ENCODE measurements at regions of chr16 and their contacts with region 1.

Region 1: DNA sequence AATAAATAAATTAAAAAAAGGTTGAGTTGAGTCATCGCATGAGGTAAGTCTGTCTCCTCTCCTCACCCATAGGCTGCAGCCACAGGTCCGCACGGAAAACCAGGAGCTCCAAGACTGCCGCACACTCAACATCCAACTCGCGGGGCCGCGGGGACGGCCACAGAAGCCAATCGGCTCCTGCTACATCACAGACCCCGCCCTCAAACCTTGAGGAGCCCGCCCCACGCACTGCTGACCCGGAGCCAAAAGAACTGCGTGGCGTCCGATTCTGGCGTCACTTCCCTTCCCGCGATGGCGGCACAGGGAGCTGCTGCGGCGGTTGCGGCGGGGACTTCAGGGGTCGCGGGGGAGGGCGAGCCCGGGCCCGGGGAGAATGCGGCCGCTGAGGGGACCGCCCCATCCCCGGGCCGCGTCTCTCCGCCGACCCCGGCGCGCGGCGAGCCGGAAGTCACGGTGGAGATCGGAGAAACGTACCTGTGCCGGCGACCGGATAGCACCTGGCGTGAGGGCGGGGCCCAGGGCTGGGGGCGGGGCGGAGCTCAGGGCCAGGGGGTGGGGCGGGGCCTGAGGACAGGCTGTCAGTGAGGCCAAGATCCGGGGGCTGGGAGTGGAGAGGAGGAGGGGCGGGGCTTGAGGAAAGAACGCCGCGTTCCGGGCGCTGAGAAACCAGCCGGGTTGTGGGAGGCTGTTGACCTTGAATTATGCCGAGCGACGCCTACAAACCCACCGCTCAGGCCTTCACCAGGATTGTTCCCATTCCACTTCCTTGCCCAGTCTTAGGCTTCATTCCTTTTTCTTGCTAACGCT is at the start of gene KAT8:
- DNase-seq: peak; percentile 96 to 99 (median 97)
- H3K4me3 ChIP-seq: peak within 1 kb of the TSS; percentile 61 to 91 (median 79)
- H3K4me3 Mint-ChIP-seq: peak within 1 kb of the TSS; percentile 91
- H3K27ac ChIP-seq: peak within 1 kb of the TSS; percentile 97 to 99
- H3K27ac Mint-ChIP-seq: peak within 1 kb of the TSS; percentile 97 to 100 (median 100)
- H3K4me1 ChIP-seq: peaks cover 55 to 67% of the 10 kb centered on the region in 2 donors
- H3K4me1 Mint-ChIP-seq: peaks cover 54% of the 10 kb centered on the region
- H3K27me3 ChIP-seq: no peaks in the 10 kb centered on the region
- H3K27me3 Mint-ChIP-seq: peaks cover 0 to 2% (median 0%) of the 10 kb centered on the region in 3 donors
- CTCF ChIP-seq: no peak
- polyA plus RNA-seq, gene KAT8: 34.5 to 136 (median 42.0) TPM

Region 2: DNA sequence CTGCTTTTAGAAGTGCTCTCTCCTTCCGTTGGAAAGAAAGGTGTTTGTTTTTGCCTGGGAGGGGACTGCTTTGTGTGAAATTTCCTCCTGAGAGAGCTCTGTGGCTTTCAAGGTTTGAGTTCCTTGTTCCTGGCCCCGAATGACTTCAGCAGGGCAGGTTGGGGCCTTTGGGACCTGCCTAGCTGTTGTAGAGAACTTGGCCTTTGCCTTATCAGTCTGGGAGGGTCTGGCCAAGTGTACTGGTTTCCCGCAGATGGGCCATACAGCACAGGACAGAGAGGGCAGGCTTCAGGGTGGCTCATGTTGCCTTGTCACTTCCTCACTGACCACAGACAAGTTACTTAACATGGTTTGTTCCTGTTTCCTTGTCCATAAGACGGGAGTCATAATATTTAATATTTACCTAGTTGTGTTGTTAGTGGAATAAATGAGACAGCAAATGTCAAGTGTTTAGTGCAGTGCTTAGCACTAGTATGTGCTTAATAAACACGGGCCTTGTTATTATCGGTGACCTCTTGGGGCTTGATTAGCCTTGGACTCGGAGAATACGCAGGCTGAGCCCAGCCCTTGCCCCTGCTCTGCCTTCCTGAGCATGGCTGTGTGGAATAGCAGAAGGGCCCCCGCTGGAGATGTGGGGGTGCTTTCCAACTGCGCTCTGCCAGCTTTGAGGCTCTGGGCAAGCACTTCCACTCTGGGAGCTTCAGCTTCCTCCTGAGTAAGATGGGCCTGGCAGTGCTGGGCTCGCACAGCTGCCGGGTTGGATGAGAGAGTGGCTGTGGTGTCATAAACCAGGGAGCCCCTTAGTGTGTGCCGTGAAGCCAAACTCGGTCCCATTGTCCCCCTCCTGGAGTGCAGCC is 11.3 kb after region 1 on chr16:
- intact Hi-C with region 1: loop called in 1 of 2 experiments (anchors 1 kb)
- DNase-seq: peak; percentile 96 to 98 (median 97)
- H3K4me3 ChIP-seq: peak overlapping the region in 1 of 3 experiments; percentile 53
- H3K4me3 Mint-ChIP-seq: peak overlapping the region; percentile 53 to 84
- H3K27ac ChIP-seq: peak overlapping the region; percentile 99
- H3K27ac Mint-ChIP-seq: peak overlapping the region; percentile 98 to 100 (median 99)
- H3K4me1 ChIP-seq: peaks cover 60 to 76% of the 10 kb centered on the region in 2 donors
- H3K4me1 Mint-ChIP-seq: peaks cover 70% of the 10 kb centered on the region
- H3K27me3 ChIP-seq: no peaks in the 10 kb centered on the region
- H3K27me3 Mint-ChIP-seq: peaks cover 0 to 4% (median 0%) of the 10 kb centered on the region in 3 donors
- CTCF ChIP-seq: no peak

Region 3: GRCh38 chr16:31168848-31169247 is 51.3 kb after region 1 on chr16:
- intact Hi-C with region 1: no loop called
- DNase-seq: no peak
- H3K4me3 ChIP-seq: no peak overlapping the region
- H3K4me3 Mint-ChIP-seq: no peak overlapping the region
- H3K27ac ChIP-seq: no peak overlapping the region
- H3K27ac Mint-ChIP-seq: no peak overlapping the region
- H3K4me1 ChIP-seq: no peaks in the 10 kb centered on the region
- H3K4me1 Mint-ChIP-seq: peaks cover 6% of the 10 kb centered on the region
- H3K27me3 ChIP-seq: no peaks in the 10 kb centered on the region
- H3K27me3 Mint-ChIP-seq: peaks cover 0 to 5% (median 5%) of the 10 kb centered on the region in 3 donors
- CTCF ChIP-seq: no peak

Region 4: DNA sequence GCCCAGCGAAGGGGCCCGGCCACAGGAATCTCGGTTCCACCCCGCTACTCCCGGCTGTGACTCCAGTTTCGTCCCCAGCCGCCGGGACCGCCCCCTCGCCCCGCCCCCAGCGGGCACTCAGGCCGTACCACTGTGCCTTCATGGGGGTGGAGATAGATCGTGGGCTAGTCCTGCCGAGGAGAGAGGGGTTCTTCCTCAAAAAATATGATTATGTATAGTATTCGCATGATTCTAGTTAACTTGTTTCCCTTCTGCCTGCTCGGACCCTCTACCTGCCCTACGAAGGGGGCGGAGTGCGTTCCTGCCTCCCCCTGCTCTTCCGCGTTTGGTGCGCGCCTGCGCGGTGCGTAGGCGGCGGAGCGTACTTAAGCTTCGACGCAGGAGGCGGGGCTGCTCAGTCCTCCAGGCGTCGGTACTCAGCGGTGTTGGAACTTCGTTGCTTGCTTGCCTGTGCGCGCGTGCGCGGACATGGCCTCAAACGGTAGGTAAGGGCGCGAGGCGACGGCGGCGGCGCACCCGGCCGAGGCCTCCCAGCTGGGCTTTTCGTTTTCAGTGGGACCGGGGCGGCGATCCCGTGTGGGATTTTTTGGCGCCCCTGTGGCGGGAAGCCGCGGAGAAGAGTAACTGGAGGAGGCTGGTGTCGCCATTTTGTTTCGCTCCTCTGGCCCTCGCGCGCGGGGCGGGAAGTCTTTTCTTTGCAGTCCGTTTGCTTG is 62.3 kb after region 1 on chr16 and contains the start of gene FUS:
- intact Hi-C with region 1: loop called in 1 of 2 experiments (anchors 2 kb)
- DNase-seq: peak; percentile 91 to 96 (median 94)
- H3K4me3 ChIP-seq: peak within 1 kb of the TSS; percentile 71 to 98 (median 95)
- H3K4me3 Mint-ChIP-seq: peak within 1 kb of the TSS; percentile 93 to 94
- H3K27ac ChIP-seq: peak within 1 kb of the TSS; percentile 88 to 95
- H3K27ac Mint-ChIP-seq: peak within 1 kb of the TSS; percentile 97 to 100 (median 99)
- H3K4me1 ChIP-seq: peaks cover 36 to 46% of the 10 kb centered on the region in 2 donors
- H3K4me1 Mint-ChIP-seq: peaks cover 49% of the 10 kb centered on the region
- H3K27me3 ChIP-seq: no peaks in the 10 kb centered on the region
- H3K27me3 Mint-ChIP-seq: peaks cover 2 to 6% (median 4%) of the 10 kb centered on the region in 3 donors
- CTCF ChIP-seq: no peak
- polyA plus RNA-seq, gene FUS: 54.9 to 246 (median 78.5) TPM

Region 5: DNA sequence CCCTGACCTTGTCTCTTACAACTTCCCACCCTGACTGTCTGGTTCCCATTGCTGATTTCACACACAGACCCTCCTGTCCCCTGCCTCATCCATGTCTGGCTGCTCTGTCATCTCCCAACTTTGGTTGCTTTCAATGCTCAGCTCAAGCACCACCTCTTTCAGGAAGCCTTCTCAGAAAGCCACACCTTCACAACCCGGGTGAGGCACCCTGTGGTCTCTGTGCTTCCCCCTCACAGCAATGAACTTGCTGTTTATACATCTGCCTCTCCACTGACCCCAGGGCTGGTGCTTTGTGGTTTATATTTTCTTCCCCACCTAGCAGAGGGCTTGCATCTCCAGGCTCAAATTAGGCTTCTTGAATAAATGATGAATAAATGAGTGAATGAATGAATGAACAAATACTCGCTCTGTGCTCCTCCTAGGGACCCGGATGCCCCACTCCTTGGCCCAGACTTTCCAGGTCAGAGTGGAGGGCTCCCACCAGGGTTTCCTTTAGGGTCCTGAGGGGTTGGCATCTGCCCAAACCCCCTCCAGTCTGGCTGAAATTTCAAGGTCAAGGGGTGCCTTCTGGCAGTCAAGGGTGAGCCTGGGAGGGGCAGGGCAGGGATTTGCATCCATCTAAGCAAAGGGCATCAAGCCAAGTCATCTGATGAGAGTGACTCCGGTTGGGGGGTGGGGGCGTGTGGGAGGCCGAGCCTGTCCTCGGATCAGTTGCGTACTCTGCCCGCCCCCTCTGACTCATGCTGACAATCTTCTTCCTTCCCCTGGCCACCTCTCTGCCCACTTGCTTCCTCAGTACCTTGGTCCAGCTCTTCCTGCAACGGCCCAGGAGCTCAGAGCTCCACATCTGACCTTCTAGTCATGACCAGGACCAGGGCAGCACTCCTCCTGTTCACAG is 237.0 kb after region 1 on chr16 and contains the start of gene ITGAX:
- intact Hi-C with region 1: loop called (anchors 5 kb)
- DNase-seq: peak; percentile 97 to 98 (median 97)
- H3K4me3 ChIP-seq: peak within 1 kb of the TSS; percentile 67 to 93 (median 75)
- H3K4me3 Mint-ChIP-seq: peak within 1 kb of the TSS; percentile 97 to 100
- H3K27ac ChIP-seq: peak within 1 kb of the TSS; percentile 99
- H3K27ac Mint-ChIP-seq: peak within 1 kb of the TSS; percentile 99 to 100 (median 100)
- H3K4me1 ChIP-seq: peaks cover 95 to 100% of the 10 kb centered on the region in 2 donors
- H3K4me1 Mint-ChIP-seq: peaks cover 82% of the 10 kb centered on the region
- H3K27me3 ChIP-seq: no peaks in the 10 kb centered on the region
- H3K27me3 Mint-ChIP-seq: peaks cover 0 to 10% (median 3%) of the 10 kb centered on the region in 3 donors
- CTCF ChIP-seq: no peak
- polyA plus RNA-seq, gene ITGAX: 40.7 to 710 (median 71.3) TPM

Region 6: DNA sequence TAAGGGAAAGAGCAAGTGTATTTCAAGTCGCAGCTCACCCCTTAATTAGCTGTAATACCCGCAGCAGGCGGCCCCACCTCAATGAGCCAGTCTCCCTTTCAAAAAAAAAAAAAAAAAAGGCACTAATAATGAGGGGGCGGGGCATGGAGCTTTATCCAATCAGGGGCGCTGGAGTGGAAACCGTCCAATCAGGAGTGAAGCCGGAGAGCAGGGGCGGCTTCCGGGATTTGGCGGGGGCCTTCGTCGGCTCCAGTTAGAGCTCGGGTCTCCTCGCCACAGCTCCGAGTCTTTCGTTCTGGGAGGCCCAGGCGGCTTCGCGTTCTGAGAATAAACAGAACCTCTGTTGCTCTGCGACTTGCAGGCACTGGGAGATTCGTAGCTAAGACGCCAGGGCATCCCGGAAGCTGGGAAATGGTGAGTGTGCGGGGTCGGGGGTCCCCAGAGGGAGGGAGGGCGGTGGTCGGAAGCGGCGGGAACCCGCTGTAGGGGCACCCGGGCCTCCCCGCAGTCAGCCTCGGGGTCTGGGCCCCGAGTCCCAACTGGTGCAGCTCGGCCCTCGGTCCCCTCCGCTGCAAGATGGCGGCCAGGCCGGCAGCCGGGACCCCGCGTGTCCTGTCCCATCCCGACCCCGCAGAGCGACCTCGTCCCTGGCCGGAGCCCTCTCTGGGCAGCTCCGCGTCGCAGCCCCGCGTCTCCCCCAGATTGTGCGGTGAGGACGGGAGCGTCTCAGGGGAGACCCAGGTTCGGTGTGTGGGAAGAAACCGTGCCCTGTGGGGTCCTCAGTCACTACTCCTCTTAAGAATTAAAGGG is 756.2 kb after region 1 on chr16 and contains the start of gene ZNF267:
- intact Hi-C with region 1: loop called in 1 of 2 experiments (anchors 10 kb)
- DNase-seq: peak; percentile 95 to 97 (median 96)
- H3K4me3 ChIP-seq: peak within 1 kb of the TSS; percentile 82 to 94 (median 85)
- H3K4me3 Mint-ChIP-seq: peak within 1 kb of the TSS; percentile 90 to 95
- H3K27ac ChIP-seq: peak within 1 kb of the TSS; percentile 96 to 100
- H3K27ac Mint-ChIP-seq: peak within 1 kb of the TSS; percentile 98 to 100 (median 99)
- H3K4me1 ChIP-seq: peaks cover 65 to 83% of the 10 kb centered on the region in 2 donors
- H3K4me1 Mint-ChIP-seq: peaks cover 78% of the 10 kb centered on the region
- H3K27me3 ChIP-seq: no peaks in the 10 kb centered on the region
- H3K27me3 Mint-ChIP-seq: no peaks in the 10 kb centered on the region
- CTCF ChIP-seq: no peak
- polyA plus RNA-seq, gene ZNF267: 13.5 to 23.8 (median 18.0) TPM

Measured in CD14-positive monocyte (primary cell).